Activated CD4-positive, alpha-beta T cell treated with anti-CD3 and anti-CD28 coated beads for 36 hours (primary cell): ENCODE measurements at regions of chr18 and their contacts with region 1.

Region 1: GRCh38 chr18:24189007-24189528 is 50.2 kb downstream of the CABYR start:
- DNase-seq: no peak
- ATAC-seq: no peak
- H3K4me3 Mint-ChIP-seq: no peak overlapping the region
- H3K27ac Mint-ChIP-seq: no peak overlapping the region
- H3K4me1 Mint-ChIP-seq: no peaks in the 10 kb centered on the region
- H3K27me3 Mint-ChIP-seq: peaks cover 7% of the 10 kb centered on the region

Region 2: DNA sequence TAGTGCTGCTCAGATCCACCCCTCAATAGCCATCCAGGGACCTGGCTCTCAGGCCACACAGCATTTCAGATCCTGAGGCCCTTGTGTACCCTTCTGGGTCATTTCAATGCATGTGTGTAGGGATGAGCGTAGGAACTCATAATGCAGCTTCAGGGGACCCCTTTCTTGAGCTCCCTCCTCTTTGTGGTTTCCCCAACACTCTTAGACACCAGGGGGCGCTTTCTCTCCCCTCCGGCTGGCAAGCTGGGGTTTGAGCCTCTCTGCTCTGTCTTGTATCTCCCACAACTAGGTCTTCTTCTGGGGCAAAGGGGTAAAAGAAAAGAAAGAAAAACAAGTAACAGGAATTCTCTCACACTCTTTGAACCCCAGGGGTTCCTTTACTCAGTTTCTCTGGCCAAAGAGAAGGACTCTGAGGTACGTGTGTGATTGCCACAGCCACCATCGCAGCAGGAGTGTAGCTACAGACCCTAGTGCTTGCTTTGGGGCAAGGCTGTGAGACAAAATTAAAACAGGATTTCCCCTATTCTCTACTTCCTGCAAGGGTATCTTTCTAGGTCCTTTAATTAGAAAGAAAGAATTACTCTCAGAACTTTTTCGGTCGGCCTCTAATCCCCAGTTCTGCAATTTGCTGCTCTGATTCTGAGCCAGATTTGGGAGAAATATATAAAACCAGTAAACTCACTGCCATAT is 12.2 kb before region 1 on chr18:
- CTCF ChIA-PET with region 1: interaction called, 40 read pairs
- POLR2A ChIA-PET with region 1: no interaction called
- intact Hi-C with region 1: no loop called
- DNase-seq: peak; percentile 75
- ATAC-seq: no peak
- H3K4me3 Mint-ChIP-seq: no peak overlapping the region
- H3K27ac Mint-ChIP-seq: no peak overlapping the region
- H3K4me1 Mint-ChIP-seq: peaks cover 6% of the 10 kb centered on the region
- H3K27me3 Mint-ChIP-seq: no peaks in the 10 kb centered on the region

Region 3: GRCh38 chr18:24397694-24398365 is 208.8 kb after region 1 on chr18 and contains the start of gene OSBPL1A:
- CTCF ChIA-PET with region 1: no interaction called
- POLR2A ChIA-PET with region 1: no interaction called
- intact Hi-C with region 1: no loop called
- DNase-seq: peak; percentile 88
- ATAC-seq: peak; percentile 86
- H3K4me3 Mint-ChIP-seq: peak within 1 kb of the TSS; percentile 76
- H3K27ac Mint-ChIP-seq: peak within 1 kb of the TSS; percentile 59
- H3K4me1 Mint-ChIP-seq: peaks cover 28% of the 10 kb centered on the region
- H3K27me3 Mint-ChIP-seq: peaks cover 16% of the 10 kb centered on the region
- total RNA-seq, gene OSBPL1A: 2.9 to 3.4 TPM